CD4-positive, alpha-beta T cell (primary cell): ENCODE measurements at regions of chr9 and their contacts with region 1.

Region 1: DNA sequence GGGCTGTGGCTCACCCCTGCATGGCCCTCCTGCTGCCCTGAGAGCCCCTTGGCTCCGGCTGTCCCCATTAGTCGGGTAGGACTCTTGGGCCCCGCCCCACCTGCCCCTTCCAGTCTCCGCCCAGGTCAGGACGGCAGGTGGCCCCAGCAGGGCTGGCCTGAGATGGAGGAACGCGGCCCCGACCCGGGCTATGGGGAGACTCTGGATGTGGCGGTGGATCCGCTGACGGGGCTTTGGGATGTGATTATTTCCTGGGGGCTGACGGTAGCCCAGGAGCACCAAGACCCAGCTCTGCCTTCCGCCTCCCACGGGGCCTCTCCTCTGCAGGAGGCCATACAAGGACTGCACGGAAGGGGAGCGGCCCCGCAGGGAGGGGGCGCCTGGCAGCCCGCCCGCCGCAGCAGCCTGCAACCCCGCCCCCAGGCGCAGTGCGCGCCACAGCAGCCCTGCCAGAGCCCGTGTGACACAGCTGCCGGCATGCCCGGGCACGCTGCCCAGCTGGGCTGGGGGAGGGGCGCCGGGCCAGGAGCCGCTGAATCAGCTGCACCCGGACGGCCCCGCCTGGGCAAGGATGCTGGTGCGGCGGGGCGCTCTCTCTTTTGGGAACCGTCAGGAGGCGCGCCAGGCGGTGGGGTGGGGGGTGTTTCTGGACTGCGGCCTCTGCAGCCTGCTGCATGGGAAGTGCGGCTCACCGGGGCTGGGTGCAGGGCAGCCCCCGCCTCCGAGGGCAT is 9.2 kb downstream of the TMEM250 start:
- DNase-seq: peak; percentile 83 to 95 (median 93)
- ATAC-seq: peak; percentile 93
- H3K4me3 ChIP-seq: peak overlapping the region; percentile 61
- H3K4me3 Mint-ChIP-seq: peak overlapping the region; percentile 89
- H3K27ac ChIP-seq: peak overlapping the region; percentile 56 to 73
- H3K27ac Mint-ChIP-seq: peak overlapping the region; percentile 86
- H3K4me1 ChIP-seq: peaks cover 95% of the 10 kb centered on the region
- H3K4me1 Mint-ChIP-seq: peaks cover 78% of the 10 kb centered on the region
- H3K27me3 ChIP-seq: no peaks in the 10 kb centered on the region
- H3K27me3 Mint-ChIP-seq: no peaks in the 10 kb centered on the region
- CTCF ChIP-seq: no peak

Region 2: DNA sequence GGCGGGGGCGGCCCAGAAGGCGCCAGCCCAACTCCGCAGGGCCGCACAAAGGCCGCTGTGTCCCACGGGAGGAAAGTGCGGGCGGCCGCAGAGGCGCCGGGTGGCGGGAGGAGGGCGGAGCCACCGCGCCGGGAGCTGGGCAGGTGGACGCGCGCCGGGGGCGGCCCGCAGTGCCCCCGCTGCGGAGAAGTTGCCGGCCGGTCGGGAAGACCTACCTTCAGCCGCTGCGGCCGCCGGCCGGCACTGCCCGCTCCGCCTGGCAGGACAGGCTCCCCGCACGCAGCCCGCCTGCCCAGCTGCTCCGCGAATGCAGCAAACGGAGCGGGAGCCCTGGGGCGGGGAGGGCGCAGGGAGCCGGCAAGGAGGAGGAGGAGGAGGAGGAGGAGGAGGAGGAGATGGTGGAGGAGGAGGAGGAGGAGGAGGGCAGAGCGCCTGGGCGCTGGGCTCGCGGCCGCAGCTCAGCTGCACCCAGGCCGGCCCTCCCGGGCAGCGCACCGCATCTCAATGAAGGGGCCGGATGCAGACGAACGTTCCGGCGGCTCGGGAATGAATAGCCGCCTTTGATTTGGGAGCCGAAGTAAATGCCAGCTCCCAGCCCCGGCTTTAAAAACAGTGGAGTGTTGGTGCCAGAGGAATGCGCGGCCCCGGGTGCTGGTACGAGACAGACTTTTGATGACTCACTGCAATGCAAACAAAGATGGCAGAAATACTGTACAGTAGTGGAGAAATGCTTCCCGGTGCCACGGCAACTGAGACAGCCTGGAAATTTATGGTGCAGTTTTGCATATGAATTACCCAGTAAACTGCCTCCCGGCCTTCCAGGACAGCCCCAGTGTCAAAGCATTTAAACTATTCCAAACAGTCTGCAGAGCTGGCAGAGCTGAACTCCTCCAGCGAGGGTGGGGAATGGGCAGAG is 57.7 kb before region 1 on chr9:
- CTCF ChIA-PET with region 1: no interaction called
- POLR2A ChIA-PET with region 1: no interaction called
- intact Hi-C with region 1: no loop called
- DNase-seq: peak in 4 of 14 experiments; percentile 12 to 52 (median 36)
- ATAC-seq: peak; percentile 41
- H3K4me3 ChIP-seq: peak overlapping the region; percentile 33
- H3K4me3 Mint-ChIP-seq: peak overlapping the region; percentile 76
- H3K27ac ChIP-seq: no peak overlapping the region
- H3K27ac Mint-ChIP-seq: no peak overlapping the region
- H3K4me1 ChIP-seq: peaks cover 62% of the 10 kb centered on the region
- H3K4me1 Mint-ChIP-seq: peaks cover 15% of the 10 kb centered on the region
- H3K27me3 ChIP-seq: peaks cover 18 to 20% of the 10 kb centered on the region in 2 experiments
- H3K27me3 Mint-ChIP-seq: peaks cover 18% of the 10 kb centered on the region
- CTCF ChIP-seq: no peak

Region 3: DNA sequence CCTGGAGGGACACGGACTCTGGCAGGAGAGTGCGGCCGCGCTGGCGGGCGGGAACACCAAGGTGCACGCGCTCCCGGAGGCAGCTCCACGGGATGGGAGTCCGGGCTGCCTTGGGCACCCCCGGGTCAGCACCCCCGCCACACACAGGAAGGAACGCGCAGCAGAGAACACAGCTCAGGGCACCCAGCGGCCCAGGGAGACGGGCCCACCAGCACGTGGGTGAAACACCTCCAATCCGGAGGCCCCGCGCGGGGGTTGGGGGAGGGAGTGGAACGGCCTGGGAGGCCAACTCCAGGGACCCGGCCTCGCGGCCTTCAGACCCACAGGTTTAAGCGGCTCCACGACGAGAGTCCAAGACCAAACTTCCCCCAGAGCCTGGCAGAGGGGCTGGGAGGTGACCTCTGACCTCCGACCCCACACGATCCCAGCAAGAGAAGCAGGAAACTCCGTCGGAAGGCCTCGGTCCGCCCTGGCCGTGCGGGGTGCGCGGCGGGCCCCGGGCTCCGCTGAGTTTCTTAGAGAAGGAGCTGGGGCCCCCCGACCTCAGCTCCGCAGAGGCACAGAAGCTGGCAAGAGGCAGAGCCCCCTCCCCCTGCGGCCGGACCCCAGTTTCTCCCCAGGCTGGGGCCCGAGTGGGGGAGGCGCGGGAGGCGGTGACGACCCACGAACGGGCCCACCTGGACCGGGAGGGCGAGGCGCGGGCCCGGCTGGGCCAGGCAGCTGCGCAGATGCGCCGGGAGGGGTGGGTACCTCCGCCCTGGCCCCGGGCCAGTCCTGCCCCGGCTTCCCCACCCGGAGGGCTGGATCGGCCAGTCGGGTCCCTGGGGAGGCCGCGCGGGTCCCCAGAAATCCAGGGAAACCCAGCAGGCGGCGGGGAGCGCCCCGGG is 15.3 kb before region 1 on chr9:
- CTCF ChIA-PET with region 1: interaction called, 4 read pairs
- POLR2A ChIA-PET with region 1: interaction called, 50 read pairs
- intact Hi-C with region 1: loop called in 1 of 2 experiments (anchors 1 kb)
- DNase-seq: peak in 12 of 14 experiments; percentile 38 to 72 (median 52)
- ATAC-seq: peak; percentile 76
- H3K4me3 ChIP-seq: peak overlapping the region; percentile 57
- H3K4me3 Mint-ChIP-seq: peak overlapping the region; percentile 86
- H3K27ac ChIP-seq: peak overlapping the region; percentile 16 to 22
- H3K27ac Mint-ChIP-seq: peak overlapping the region; percentile 36
- H3K4me1 ChIP-seq: peaks cover 64% of the 10 kb centered on the region
- H3K4me1 Mint-ChIP-seq: peaks cover 19% of the 10 kb centered on the region
- H3K27me3 ChIP-seq: peaks cover 0 to 2% of the 10 kb centered on the region in 2 experiments
- H3K27me3 Mint-ChIP-seq: no peaks in the 10 kb centered on the region
- CTCF ChIP-seq: no peak